OCI-LY7 (cell line): ENCODE measurements at regions of chr11 and their contacts with region 1.

Region 1: DNA sequence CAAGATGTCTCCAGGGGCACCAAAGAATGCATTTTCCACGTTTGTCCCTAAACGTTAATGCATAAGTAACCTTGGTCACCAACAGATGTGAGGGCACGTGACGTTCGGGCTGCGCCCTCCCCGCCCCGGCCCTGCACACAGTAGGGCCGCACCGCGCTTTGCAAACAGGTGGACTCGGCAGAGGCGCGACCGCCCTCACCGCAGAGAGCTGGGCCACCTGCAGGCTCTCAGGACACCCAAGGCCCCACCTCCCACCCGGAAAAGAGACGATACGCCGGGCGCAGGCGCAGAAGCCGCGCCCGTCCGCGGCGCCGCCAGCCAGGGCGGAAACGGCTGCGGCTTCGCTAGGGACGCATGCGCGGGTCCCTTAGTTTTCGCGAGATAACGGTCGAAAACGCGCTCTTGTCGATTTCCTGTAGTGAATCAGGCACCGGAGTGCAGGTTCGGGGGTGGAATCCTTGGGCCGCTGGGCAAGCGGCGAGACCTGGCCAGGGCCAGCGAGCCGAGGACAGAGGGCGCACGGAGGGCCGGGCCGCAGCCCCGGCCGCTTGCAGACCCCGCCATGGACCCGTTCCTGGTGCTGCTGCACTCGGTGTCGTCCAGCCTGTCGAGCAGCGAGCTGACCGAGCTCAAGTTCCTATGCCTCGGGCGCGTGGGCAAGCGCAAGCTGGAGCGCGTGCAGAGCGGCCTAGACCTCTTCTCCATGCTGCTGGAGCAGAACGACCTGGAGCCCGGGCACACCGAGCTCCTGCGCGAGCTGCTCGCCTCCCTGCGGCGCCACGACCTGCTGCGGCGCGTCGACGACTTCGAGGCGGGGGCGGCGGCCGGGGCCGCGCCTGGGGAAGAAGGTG is at the start of gene FADD:
- DNase-seq: peak; percentile 96
- H3K4me3 ChIP-seq: peak within 1 kb of the TSS; percentile 93
- H3K27ac ChIP-seq: peak within 1 kb of the TSS; percentile 64
- H3K4me1 ChIP-seq: peaks cover 22% of the 10 kb centered on the region
- CTCF ChIP-seq: no peak
- total RNA-seq, gene FADD: 27.5 and 34.1 TPM in 2 replicates

Region 2: GRCh38 chr11:70128435-70128906 is 74.7 kb before region 1 on chr11:
- CTCF ChIA-PET with region 1: no interaction called
- POLR2A ChIA-PET with region 1: no interaction called
- intact Hi-C with region 1: no loop called
- DNase-seq: no peak
- H3K4me3 ChIP-seq: no peak overlapping the region
- H3K27ac ChIP-seq: no peak overlapping the region
- H3K4me1 ChIP-seq: no peaks in the 10 kb centered on the region
- CTCF ChIP-seq: no peak

Region 3: GRCh38 chr11:70270104-70270876 is 67.2 kb after region 1 on chr11 and contains the start of gene PPFIA1:
- CTCF ChIA-PET with region 1: no interaction called
- POLR2A ChIA-PET with region 1: no interaction called
- intact Hi-C with region 1: loop called (anchors 2 kb)
- DNase-seq: peak; percentile 97
- H3K4me3 ChIP-seq: peak within 1 kb of the TSS; percentile 94
- H3K27ac ChIP-seq: no peak within 1 kb of the TSS
- H3K4me1 ChIP-seq: peaks cover 19% of the 10 kb centered on the region
- CTCF ChIP-seq: no peak
- total RNA-seq, gene PPFIA1: 30.9 and 34.6 TPM in 2 replicates